ENCODE measurements at regions of chr1 and their contacts with region 1.

Region 1: DNA sequence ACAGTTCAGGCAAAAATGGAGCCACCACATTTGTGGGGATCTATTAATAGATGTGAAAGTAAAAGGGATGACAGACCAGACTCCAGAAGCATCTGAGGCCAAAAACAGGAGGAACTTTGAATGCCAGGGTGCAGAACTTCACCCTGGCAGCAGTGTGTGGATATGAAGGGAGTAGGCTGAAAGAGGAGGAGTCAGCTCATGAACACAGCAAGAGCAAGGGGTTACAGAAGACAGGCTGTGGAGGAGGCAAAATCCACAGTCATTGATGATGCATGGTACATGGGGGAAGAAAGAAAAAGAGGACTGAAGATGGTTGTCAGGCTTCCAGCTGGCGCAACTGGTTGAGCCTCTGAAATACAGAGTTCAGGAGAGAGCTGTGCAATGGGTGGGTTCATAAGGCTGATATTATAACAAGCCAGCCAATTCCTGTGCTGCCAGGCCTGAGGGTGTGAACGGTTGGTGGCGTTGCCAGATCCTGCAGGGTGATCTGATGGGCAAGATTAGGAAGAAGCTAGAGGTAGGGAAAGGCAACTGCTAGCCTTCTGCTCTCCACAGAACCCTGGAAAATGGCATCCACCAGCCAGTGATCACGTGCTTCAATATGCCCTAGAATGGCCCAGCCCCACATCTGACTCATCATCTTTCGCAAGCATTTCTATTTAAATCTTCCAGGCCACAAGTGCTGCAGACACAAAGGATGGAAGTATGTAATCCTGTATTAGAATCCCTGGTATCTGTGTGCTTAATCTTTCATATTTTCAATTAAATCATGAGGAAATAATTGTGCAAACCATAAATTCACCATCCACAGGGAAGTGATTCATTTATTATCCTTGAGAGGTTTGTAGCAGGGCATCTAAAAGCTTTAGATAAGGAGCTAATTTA is 81.9 kb downstream of the SLC25A24 start:
- DNase-seq: no peak
- ATAC-seq: no peak

Region 2: GRCh38 chr1:107782217-107782845 is 335.9 kb before region 1 on chr1:
- intact Hi-C with region 1: loop called (anchors 2 to 10 kb)
- DNase-seq: no peak
- ATAC-seq: peak; percentile 55